Activated T-helper 1 cell treated with anti-CD3 and anti-CD28 coated beads, Interleukin-12 subunit alpha, Interleukin-12 subunit beta, Interleukin-2, Interleukin-4 antibody, amounts not matched to agents 30 ng/mL and 10 ng/mL and 1 ng/mL, durations not matched to agents 14 hours and 24 hours and 36 hours (primary cell): ENCODE measurements at regions of chr11 and their contacts with region 1.

Region 1: DNA sequence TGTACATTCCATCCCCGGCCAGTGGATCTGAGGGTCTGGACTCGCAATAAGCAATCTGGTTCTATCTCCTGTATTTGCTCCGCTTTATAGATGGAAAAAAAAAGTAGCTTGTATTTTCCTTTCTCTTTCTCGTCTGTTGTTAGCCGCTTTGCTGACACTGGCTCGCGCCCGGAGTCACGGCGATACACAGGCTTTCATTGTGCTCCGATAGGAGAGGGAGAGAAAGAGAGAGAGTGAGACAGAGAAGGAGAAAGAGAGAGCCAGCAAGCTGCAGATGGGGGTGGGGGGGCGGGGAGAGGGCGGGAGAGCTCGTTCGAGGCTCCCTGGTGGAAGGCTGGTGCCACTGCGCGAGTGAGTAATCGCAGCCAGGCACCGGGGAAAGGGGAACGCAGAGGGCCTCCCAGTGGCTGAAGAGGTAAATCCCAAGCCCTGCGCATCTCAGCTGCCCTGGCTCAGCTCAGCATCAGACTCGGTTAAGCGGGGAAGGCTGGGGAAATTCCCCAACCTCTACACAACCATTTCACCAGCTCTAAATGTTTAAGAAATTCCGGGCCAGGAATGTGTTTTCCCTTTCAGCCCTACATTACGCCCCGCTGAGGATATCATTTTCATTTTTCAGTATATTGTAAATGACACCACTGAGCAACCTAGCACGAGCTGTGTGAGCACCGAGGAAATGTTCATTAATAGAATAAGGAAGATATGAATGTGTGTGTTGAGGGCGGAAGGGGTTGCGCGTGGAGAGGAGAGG is at the start of gene MAML2:
- DNase-seq: peak; percentile 85
- H3K4me3 Mint-ChIP-seq: peak within 1 kb of the TSS; percentile 94
- H3K27ac Mint-ChIP-seq: peak within 1 kb of the TSS; percentile 89
- H3K4me1 Mint-ChIP-seq: peaks cover 49% of the 10 kb centered on the region
- H3K27me3 Mint-ChIP-seq: no peaks in the 10 kb centered on the region
- total RNA-seq, gene MAML2: 10.0 and 10.1 TPM in 2 replicates

Region 2: GRCh38 chr11:95835768-95836488 is 507.2 kb before region 1 on chr11:
- intact Hi-C with region 1: loop called (anchors 1 kb)
- DNase-seq: peak; percentile 29
- H3K4me3 Mint-ChIP-seq: no peak overlapping the region
- H3K27ac Mint-ChIP-seq: peak overlapping the region; percentile 0
- H3K4me1 Mint-ChIP-seq: no peaks in the 10 kb centered on the region
- H3K27me3 Mint-ChIP-seq: no peaks in the 10 kb centered on the region

Region 3: GRCh38 chr11:96091476-96091875 is 251.7 kb before region 1 on chr11:
- intact Hi-C with region 1: loop called (anchors 1 kb)
- DNase-seq: no peak
- H3K4me3 Mint-ChIP-seq: no peak overlapping the region
- H3K27ac Mint-ChIP-seq: no peak overlapping the region
- H3K4me1 Mint-ChIP-seq: peaks cover 47% of the 10 kb centered on the region
- H3K27me3 Mint-ChIP-seq: no peaks in the 10 kb centered on the region

Region 4: GRCh38 chr11:96207459-96208449 is 135.4 kb before region 1 on chr11:
- intact Hi-C with region 1: loop called (anchors 1 kb)
- DNase-seq: no peak
- H3K4me3 Mint-ChIP-seq: peak overlapping the region; percentile 72
- H3K27ac Mint-ChIP-seq: peak overlapping the region; percentile 95
- H3K4me1 Mint-ChIP-seq: peaks cover 83% of the 10 kb centered on the region
- H3K27me3 Mint-ChIP-seq: no peaks in the 10 kb centered on the region

Region 5: DNA sequence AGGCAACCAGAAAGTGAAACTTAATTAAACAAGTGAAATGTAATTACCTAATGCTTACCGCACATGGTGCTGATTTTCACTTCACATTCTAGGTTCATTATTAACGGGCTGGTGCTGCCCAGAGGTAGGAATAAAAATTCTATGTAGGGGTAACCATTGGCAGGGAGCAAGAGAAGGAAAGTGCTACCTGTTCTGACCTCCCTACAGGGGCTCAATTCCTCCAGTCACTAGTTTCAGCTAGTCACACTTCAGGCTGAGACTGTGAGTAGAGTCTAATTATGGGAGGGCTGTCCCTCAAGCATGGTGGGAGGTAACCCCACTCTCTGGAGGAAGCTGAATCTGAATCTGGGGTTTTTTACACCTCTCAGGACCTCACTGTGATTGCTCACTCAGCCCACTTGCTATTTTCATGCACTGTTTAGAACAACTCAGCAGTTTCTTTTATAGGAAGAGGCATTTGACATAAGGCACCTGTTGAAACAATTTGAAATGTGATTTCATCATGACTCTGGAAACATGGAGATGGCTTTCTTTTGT is 75.6 kb before region 1 on chr11:
- intact Hi-C with region 1: loop called (anchors 1 kb)
- DNase-seq: no peak
- H3K4me3 Mint-ChIP-seq: peak overlapping the region; percentile 43
- H3K27ac Mint-ChIP-seq: peak overlapping the region; percentile 57
- H3K4me1 Mint-ChIP-seq: peaks cover 78% of the 10 kb centered on the region
- H3K27me3 Mint-ChIP-seq: no peaks in the 10 kb centered on the region

Region 6: GRCh38 chr11:96389720-96390487 is 46.8 kb after region 1 on chr11 and contains the starts of genes CCDC82 and JRKL:
- intact Hi-C with region 1: loop called (anchors 1 kb)
- DNase-seq: peak; percentile 97
- H3K4me3 Mint-ChIP-seq: peak within 1 kb of the TSS; percentile 95
- H3K27ac Mint-ChIP-seq: peak within 1 kb of the TSS; percentile 85
- H3K4me1 Mint-ChIP-seq: peaks cover 64% of the 10 kb centered on the region
- H3K27me3 Mint-ChIP-seq: no peaks in the 10 kb centered on the region
- total RNA-seq, gene CCDC82: 28.5 and 29.9 TPM in 2 replicates
- total RNA-seq, gene JRKL: 9.6 and 10.2 TPM in 2 replicates